ENCODE measurements at regions of chr21 and their contacts with region 1.

Region 1: DNA sequence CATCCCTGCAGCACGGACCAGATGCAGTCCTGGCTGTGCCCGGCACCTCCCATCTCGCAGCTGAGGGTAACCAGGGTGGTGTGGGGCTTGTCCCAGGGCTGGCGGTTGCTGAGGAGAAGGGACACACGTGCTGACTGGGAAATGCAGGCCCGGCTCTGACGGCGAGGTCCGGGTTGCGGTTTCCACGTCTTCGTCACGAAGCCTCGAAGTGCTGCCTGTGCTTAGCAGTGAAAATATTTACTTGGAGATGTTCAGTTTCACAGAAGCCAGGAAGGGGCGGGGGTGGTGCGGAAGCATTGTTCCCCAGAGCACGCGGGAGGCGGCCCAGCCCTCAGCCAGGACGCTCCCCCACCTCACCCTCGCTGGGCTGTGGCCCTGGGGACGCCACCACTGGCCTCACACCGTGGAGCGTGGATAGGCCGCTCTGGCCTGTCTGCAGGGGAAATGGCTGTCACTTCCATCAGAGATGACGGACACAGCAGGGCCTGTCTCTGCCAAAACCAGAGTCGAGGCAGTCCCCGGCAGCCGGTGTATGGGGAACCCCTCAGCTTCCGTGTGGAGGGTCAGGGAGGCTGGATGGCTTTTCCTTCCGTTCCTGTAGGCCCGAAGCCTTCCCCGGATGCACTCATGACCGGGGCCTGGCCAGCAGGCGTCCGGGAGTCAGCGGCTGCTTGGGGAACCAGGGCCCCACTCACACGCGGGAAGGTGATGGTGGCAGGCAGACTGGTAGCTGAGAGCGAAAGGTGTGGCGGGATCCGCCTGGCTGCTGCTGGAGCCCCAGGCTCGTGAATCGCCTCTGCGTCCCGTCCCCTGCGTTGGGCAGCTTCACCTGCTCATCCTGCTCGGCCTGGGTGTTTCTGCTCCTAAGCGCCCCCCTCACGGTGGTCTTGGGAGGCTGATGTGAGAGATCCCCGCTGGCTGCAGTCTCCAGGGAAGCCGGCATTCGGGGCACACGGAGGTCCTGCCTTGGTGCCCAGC is 14.7 kb upstream of the POFUT2 start:
- DNase-seq: peak in 2 of 6 donors; percentile 17 to 58
- ATAC-seq: peak in 2 of 4 donors; percentile 14 to 17
- H3K4me3 ChIP-seq: no peak overlapping the region
- H3K27ac ChIP-seq: peak overlapping the region in 2 of 4 donors; percentile 24 to 60
- H3K4me1 ChIP-seq: peaks cover 0 to 7% (median 4%) of the 10 kb centered on the region in 3 donors
- H3K27me3 ChIP-seq: no peaks in the 10 kb centered on the region
- CTCF ChIP-seq: no peak

Region 2: DNA sequence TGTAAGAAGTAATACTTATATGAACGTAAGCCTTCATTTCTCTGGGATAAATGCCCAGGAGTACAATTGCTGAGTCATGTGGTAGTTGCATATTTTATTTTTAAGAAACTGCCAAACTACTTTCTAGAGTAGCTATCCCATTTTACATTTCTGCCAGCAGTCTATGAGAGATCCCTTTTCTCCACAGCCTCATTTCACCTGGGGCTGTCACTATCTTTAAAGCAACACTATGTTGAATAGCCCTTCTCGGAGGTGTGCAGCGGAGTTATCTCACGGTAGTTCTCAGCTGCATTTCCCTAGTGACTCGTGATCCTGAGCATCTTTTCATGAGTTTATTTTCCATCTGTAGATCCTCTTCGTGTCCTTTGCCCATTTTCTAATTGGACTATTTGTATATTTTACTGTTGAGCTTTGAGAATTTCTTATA is 134.6 kb before region 1 on chr21:
- intact Hi-C with region 1: no loop called
- DNase-seq: no peak
- ATAC-seq: no peak
- H3K4me3 ChIP-seq: no peak overlapping the region
- H3K27ac ChIP-seq: no peak overlapping the region
- H3K4me1 ChIP-seq: no peaks in the 10 kb centered on the region
- H3K27me3 ChIP-seq: no peaks in the 10 kb centered on the region
- CTCF ChIP-seq: no peak

Region 3: GRCh38 chr21:45202889-45203288 is 99.5 kb before region 1 on chr21:
- intact Hi-C with region 1: no loop called
- DNase-seq: no peak
- ATAC-seq: no peak
- H3K4me3 ChIP-seq: no peak overlapping the region
- H3K27ac ChIP-seq: no peak overlapping the region
- H3K4me1 ChIP-seq: no peaks in the 10 kb centered on the region
- H3K27me3 ChIP-seq: no peaks in the 10 kb centered on the region
- CTCF ChIP-seq: no peak

Region 4: DNA sequence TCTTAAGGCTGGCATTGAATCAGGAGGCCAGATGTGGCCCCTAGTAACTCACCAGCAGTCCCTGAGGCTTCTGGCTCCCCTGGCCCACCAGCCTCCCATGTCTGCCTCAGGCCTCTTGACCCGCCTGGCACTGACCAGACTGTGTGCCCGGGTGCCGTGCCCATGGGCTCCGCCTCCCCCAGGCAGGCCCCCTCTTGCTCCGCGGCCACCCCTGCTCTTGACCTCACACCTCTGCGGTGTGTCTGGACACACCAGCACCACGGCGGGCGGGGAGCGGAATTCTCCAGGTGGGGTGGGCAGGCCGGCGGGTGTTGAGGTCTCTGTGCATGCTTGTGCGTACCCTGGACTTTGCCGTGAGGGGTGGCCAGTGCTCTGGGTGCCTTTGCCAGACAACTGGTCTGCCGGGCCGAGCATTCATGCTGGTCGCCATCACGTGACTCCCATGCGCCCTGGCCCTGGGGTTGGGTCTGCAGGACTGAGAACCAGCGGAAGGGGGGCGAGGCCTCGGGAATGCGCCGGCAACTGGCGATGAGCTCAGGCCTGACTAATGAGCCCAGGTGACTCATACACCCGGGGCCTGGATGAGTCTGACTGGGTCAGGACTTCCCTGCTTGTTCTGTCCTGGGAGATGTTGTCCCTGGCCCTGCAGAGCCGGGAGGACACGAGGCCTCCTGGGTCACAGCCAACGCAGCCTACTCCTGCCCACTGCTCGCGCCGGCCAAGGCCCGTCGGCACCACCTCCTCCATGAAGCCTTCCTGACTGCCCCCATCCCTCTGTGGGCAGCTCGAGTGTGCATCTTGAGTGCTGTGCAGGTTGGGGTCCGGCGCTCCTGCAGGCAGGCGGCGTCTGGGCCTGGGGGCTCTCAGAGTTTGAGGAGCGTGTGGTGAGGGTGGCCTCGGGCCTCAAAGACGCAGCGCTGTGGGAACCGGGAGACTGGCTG is 125.2 kb after region 1 on chr21:
- intact Hi-C with region 1: loop called in 1 of 3 experiments (anchors 5 kb)
- DNase-seq: peak in 5 of 6 donors; percentile 64 to 83 (median 73)
- ATAC-seq: peak; percentile 64 to 84 (median 76)
- H3K4me3 ChIP-seq: no peak overlapping the region
- H3K27ac ChIP-seq: peak overlapping the region; percentile 43 to 68 (median 54)
- H3K4me1 ChIP-seq: peaks cover 0 to 6% (median 0%) of the 10 kb centered on the region in 3 donors
- H3K27me3 ChIP-seq: no peaks in the 10 kb centered on the region
- CTCF ChIP-seq: no peak

Region 5: DNA sequence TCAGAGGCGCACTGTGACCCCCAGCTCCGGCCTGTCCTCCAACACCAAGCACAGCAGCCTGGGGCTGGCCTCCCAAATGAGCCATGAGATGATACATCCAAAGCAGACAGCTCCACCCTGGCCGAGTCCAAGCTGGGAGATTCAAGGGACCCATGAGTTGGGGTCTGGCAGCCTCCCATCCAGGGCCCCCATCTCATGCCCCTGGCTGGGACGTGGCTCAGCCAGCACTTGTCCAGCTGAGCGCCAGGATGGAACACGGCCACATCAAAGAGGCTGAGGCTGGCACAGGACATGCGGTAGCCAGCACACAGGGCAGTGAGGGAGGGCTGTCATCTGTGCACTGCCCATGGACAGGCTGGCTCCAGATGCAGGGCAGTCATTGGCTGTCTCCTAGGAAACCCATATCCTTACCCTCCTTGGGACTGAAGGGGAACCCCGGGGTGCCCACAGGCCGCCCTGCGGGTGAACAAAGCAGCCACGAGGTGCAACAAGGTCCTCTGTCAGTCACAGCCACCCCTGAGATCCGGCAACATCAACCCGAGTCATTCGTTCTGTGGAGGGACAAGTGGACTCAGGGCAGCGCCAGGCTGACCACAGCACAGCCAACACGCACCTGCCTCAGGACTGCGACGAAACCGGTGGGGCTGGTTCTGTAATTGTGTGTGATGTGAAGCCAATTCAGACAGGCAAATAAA is 210.8 kb after region 1 on chr21:
- intact Hi-C with region 1: no loop called
- DNase-seq: peak; percentile 49 to 74 (median 59)
- ATAC-seq: peak; percentile 62 to 86 (median 78)
- H3K4me3 ChIP-seq: no peak overlapping the region
- H3K27ac ChIP-seq: peak overlapping the region in 2 of 4 donors; percentile 9 to 58
- H3K4me1 ChIP-seq: peaks cover 7 to 18% (median 11%) of the 10 kb centered on the region in 3 donors
- H3K27me3 ChIP-seq: no peaks in the 10 kb centered on the region
- CTCF ChIP-seq: no peak

Measured in pancreas (tissue), 10 donors.